Mammary epithelial cell (primary cell): ENCODE measurements at regions of chr9 and their contacts with region 1.

Region 1: GRCh38 chr9:112166172-112167140 is 8.6 kb downstream of the SUSD1 start:
- DNase-seq: peak; percentile 98
- H3K4me3 ChIP-seq: no peak overlapping the region
- H3K27ac ChIP-seq: peak overlapping the region; percentile 88
- H3K4me1 ChIP-seq: peaks cover 38% of the 10 kb centered on the region
- H3K27me3 ChIP-seq: no peaks in the 10 kb centered on the region
- CTCF ChIP-seq: peak; percentile 47 to 49

Region 2: GRCh38 chr9:111937781-111938426 is 228.6 kb before region 1 on chr9:
- CTCF ChIA-PET with region 1: no interaction called
- dilution Hi-C with region 1: no loop called
- in situ Hi-C with region 1: no loop called
- intact Hi-C with region 1: no loop called
- DNase-seq: peak; percentile 46
- H3K4me3 ChIP-seq: no peak overlapping the region
- H3K27ac ChIP-seq: no peak overlapping the region
- H3K4me1 ChIP-seq: peaks cover 12% of the 10 kb centered on the region
- H3K27me3 ChIP-seq: no peaks in the 10 kb centered on the region
- CTCF ChIP-seq: no peak

Region 3: DNA sequence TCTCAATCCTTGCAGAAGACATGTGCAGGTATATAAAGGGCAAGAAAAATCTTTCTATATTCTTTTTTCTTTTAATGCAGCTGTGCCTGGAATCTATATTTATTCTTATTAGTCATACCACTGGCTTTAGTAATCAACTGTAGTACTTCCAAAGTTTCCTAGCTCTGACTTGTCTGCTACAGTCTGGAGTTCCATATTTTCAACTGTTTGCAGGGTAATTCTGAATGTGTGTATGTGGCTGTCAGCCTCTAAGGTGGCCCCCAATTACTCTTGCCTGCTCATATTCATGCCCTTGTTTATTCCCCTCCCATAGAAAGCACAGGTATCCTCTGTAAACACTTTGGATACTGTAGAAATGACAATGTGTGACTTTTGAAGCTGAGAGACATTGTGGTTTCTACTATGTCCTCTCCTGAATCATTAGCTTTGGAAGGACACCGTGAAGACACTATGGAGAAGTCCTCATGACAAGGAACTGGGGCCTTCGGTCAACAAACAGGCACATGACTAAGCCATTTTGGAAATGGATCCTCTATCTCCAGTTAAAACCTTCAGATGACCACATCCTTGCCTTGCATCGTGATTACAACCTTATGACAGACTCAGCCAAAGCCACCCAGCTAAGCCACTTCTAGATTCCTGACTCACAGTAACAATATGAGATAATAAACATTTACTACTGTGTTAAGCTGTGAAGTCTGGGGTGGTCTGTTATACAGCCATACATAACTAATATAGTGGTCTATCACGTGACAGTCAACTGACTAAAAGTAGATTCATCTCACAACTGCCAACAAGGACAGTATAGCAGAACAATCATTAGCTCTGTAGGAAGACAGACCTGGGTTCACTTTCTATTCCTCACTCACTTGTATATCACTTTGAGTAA is 58.2 kb after region 1 on chr9:
- CTCF ChIA-PET with region 1: no interaction called
- dilution Hi-C with region 1: no loop called
- in situ Hi-C with region 1: no loop called
- intact Hi-C with region 1: loop called (anchors 5 kb)
- DNase-seq: peak; percentile 17
- H3K4me3 ChIP-seq: no peak overlapping the region
- H3K27ac ChIP-seq: no peak overlapping the region
- H3K4me1 ChIP-seq: peaks cover 5% of the 10 kb centered on the region
- H3K27me3 ChIP-seq: no peaks in the 10 kb centered on the region
- CTCF ChIP-seq: no peak